B cell (primary cell): ENCODE measurements at regions of chr13 and their contacts with region 1.

Region 1: DNA sequence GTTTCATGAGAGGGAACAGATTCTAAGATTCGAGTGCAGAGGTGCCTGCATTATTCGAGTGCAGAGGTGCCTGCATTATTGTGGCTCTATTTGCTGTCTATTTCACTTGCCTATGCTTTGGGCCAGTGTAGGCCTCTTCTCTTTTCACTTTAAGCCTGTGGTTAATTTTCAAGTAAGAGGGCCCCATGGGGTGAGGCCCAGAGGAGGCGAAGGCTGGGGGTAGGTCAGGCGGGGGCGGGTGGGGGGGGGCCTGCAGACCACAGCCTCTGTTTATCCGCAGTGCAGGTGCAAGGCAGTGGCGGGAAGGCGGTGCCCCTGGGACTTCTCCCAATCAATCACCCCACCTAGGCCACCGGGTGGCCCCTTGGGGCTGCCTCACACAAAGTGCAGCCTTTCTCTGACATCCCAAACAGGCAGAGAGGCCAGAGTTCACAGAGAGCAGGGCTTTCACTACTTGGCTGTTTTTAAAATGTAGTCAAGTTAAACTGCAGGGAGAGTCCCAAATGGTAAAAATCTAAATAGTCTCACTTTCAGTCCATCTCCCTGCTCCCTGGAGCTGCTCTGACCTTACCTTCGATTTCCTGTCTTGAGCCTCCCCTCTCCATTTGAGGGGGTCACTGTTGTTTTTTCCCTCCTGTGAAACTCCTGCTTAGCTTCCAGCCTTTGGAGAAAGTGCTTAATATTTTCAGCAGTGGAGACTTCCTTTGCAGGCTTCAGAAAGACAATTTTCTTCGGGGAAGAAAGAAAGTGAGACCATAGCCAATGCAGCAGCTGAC is 249.0 kb downstream of the DLEU7 start:
- DNase-seq: peak; percentile 83
- ATAC-seq: peak; percentile 89
- H3K4me3 ChIP-seq: peak overlapping the region in 2 of 5 experiments; percentile 10 to 35
- H3K4me3 Mint-ChIP-seq: peak overlapping the region; percentile 75
- H3K27ac ChIP-seq: peak overlapping the region; percentile 79 to 87
- H3K27ac Mint-ChIP-seq: peak overlapping the region; percentile 93
- H3K4me1 ChIP-seq: peaks cover 95 to 99% of the 10 kb centered on the region in 2 donors
- H3K4me1 Mint-ChIP-seq: peaks cover 85% of the 10 kb centered on the region
- H3K27me3 ChIP-seq: no peaks in the 10 kb centered on the region
- H3K27me3 Mint-ChIP-seq: no peaks in the 10 kb centered on the region
- CTCF ChIP-seq: no peak

Region 2: DNA sequence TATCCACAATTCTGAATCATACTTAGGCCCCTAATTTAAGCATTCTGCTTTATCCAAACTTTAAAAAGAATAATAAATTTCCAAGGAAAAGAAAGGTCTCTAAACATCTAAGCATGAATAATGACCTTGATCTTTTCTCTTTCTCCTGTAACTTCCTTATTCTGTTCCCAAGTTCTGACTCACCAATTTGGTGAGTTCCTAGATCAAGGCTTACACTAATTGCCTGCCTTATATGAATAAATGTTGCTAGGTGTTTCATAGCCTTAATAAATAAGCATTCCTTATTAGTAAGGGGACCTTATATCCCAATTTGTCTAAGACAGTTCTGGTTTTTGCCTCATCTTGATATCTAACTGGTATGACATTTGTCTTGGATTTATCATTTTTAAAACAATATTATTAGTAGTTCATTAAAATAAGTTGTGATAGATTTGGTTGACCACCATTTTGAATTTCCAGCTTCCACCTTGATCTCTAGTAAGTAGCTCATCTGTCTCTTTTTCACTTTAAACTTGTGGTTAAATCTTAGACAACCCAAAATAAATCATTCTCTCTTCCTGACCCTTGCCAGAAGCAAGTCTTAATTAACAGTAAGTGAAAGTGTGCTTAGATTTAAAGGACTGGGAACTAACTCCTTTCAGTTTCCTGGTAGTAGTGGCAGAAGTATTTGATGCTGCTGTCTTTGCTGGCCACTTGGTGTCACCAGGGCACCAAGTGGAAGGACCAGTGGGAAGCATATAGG is 1495.5 kb before region 1 on chr13:
- CTCF ChIA-PET with region 1: no interaction called
- POLR2A ChIA-PET with region 1: no interaction called
- intact Hi-C with region 1: no loop called
- DNase-seq: peak; percentile 11
- ATAC-seq: no peak
- H3K4me3 ChIP-seq: no peak overlapping the region
- H3K4me3 Mint-ChIP-seq: no peak overlapping the region
- H3K27ac ChIP-seq: no peak overlapping the region
- H3K27ac Mint-ChIP-seq: no peak overlapping the region
- H3K4me1 ChIP-seq: no peaks in the 10 kb centered on the region
- H3K4me1 Mint-ChIP-seq: peaks cover 7% of the 10 kb centered on the region
- H3K27me3 ChIP-seq: no peaks in the 10 kb centered on the region
- H3K27me3 Mint-ChIP-seq: no peaks in the 10 kb centered on the region
- CTCF ChIP-seq: no peak

Region 3: GRCh38 chr13:49976314-49977258 is 617.9 kb before region 1 on chr13:
- CTCF ChIA-PET with region 1: interaction called, 3 read pairs
- POLR2A ChIA-PET with region 1: no interaction called
- intact Hi-C with region 1: loop called (anchors 1 kb)
- DNase-seq: peak; percentile 86
- ATAC-seq: peak; percentile 78
- H3K4me3 ChIP-seq: no peak overlapping the region
- H3K4me3 Mint-ChIP-seq: no peak overlapping the region
- H3K27ac ChIP-seq: no peak overlapping the region
- H3K27ac Mint-ChIP-seq: no peak overlapping the region
- H3K4me1 ChIP-seq: peaks cover 0 to 4% of the 10 kb centered on the region in 2 donors
- H3K4me1 Mint-ChIP-seq: peaks cover 4% of the 10 kb centered on the region
- H3K27me3 ChIP-seq: no peaks in the 10 kb centered on the region
- H3K27me3 Mint-ChIP-seq: no peaks in the 10 kb centered on the region
- CTCF ChIP-seq: peak; percentile 98

Region 4: GRCh38 chr13:50123862-50124536 is 470.5 kb before region 1 on chr13:
- CTCF ChIA-PET with region 1: interaction called, 5 read pairs
- POLR2A ChIA-PET with region 1: interaction called, 5 read pairs
- intact Hi-C with region 1: loop called (anchors 1 kb)
- DNase-seq: peak; percentile 84
- ATAC-seq: peak; percentile 62
- H3K4me3 ChIP-seq: peak overlapping the region; percentile 77 to 98 (median 98)
- H3K4me3 Mint-ChIP-seq: peak overlapping the region; percentile 92
- H3K27ac ChIP-seq: peak overlapping the region; percentile 73 to 98
- H3K27ac Mint-ChIP-seq: peak overlapping the region; percentile 96
- H3K4me1 ChIP-seq: peaks cover 50 to 54% of the 10 kb centered on the region in 2 donors
- H3K4me1 Mint-ChIP-seq: peaks cover 64% of the 10 kb centered on the region
- H3K27me3 ChIP-seq: peaks cover 0 to 12% (median 6%) of the 10 kb centered on the region in 4 experiments
- H3K27me3 Mint-ChIP-seq: peaks cover 7% of the 10 kb centered on the region
- CTCF ChIP-seq: no peak

Region 5: GRCh38 chr13:50512474-50513299 is 81.8 kb before region 1 on chr13:
- CTCF ChIA-PET with region 1: interaction called, 7 read pairs
- POLR2A ChIA-PET with region 1: interaction called, 7 read pairs
- intact Hi-C with region 1: loop called (anchors 1 kb)
- DNase-seq: peak; percentile 72
- ATAC-seq: peak; percentile 84
- H3K4me3 ChIP-seq: peak overlapping the region; percentile 25 to 71 (median 47)
- H3K4me3 Mint-ChIP-seq: no peak overlapping the region
- H3K27ac ChIP-seq: peak overlapping the region; percentile 76 to 92
- H3K27ac Mint-ChIP-seq: no peak overlapping the region
- H3K4me1 ChIP-seq: peaks cover 22 to 32% of the 10 kb centered on the region in 2 donors
- H3K4me1 Mint-ChIP-seq: no peaks in the 10 kb centered on the region
- H3K27me3 ChIP-seq: no peaks in the 10 kb centered on the region
- H3K27me3 Mint-ChIP-seq: no peaks in the 10 kb centered on the region
- CTCF ChIP-seq: no peak

Region 6: DNA sequence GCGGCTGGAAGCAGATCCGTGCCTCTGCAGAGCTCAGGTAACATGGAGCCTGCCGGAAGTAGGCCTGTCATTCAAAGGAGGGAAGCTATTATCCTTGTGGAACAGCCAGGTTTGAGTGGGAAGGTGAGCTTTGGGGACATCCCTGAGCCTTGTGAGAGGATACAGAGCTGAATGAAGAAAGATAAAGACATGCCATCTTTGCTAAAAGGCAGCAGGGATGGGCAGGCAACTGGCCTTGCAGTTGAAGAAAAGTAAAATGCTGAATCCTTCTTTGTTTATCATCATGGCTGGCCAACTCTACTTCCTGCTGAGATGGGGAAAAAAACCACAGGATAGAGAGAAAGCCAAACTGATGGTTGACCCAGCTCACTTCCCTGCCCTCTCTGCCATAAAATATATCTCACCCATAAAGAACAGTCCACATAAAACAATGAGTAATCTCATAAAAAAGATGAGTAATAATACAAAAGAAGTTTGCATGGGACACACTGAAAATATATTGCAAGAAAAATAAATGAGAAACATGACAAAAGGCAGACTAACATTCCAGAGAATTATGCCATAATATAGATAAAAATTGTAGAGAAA is 22.8 kb after region 1 on chr13:
- CTCF ChIA-PET with region 1: no interaction called
- POLR2A ChIA-PET with region 1: interaction called, 3 read pairs
- intact Hi-C with region 1: loop called (anchors 2 kb)
- DNase-seq: no peak
- ATAC-seq: no peak
- H3K4me3 ChIP-seq: no peak overlapping the region
- H3K4me3 Mint-ChIP-seq: no peak overlapping the region
- H3K27ac ChIP-seq: peak overlapping the region in 1 of 2 donors; percentile 14
- H3K27ac Mint-ChIP-seq: peak overlapping the region; percentile 53
- H3K4me1 ChIP-seq: peaks cover 20 to 28% of the 10 kb centered on the region in 2 donors
- H3K4me1 Mint-ChIP-seq: peaks cover 42% of the 10 kb centered on the region
- H3K27me3 ChIP-seq: no peaks in the 10 kb centered on the region
- H3K27me3 Mint-ChIP-seq: no peaks in the 10 kb centered on the region
- CTCF ChIP-seq: no peak

Region 7: GRCh38 chr13:50676602-50677001 is 82.1 kb after region 1 on chr13:
- CTCF ChIA-PET with region 1: no interaction called
- POLR2A ChIA-PET with region 1: no interaction called
- intact Hi-C with region 1: loop called (anchors 1 kb)
- DNase-seq: peak; percentile 41
- ATAC-seq: peak; percentile 80
- H3K4me3 ChIP-seq: no peak overlapping the region
- H3K4me3 Mint-ChIP-seq: no peak overlapping the region
- H3K27ac ChIP-seq: no peak overlapping the region
- H3K27ac Mint-ChIP-seq: peak overlapping the region; percentile 54
- H3K4me1 ChIP-seq: peaks cover 19 to 21% of the 10 kb centered on the region in 2 donors
- H3K4me1 Mint-ChIP-seq: peaks cover 25% of the 10 kb centered on the region
- H3K27me3 ChIP-seq: no peaks in the 10 kb centered on the region
- H3K27me3 Mint-ChIP-seq: no peaks in the 10 kb centered on the region
- CTCF ChIP-seq: no peak